Lower lobe of right lung (tissue), 2 donors: ENCODE measurements at regions of chr1 and their contacts with region 1.

Region 1: DNA sequence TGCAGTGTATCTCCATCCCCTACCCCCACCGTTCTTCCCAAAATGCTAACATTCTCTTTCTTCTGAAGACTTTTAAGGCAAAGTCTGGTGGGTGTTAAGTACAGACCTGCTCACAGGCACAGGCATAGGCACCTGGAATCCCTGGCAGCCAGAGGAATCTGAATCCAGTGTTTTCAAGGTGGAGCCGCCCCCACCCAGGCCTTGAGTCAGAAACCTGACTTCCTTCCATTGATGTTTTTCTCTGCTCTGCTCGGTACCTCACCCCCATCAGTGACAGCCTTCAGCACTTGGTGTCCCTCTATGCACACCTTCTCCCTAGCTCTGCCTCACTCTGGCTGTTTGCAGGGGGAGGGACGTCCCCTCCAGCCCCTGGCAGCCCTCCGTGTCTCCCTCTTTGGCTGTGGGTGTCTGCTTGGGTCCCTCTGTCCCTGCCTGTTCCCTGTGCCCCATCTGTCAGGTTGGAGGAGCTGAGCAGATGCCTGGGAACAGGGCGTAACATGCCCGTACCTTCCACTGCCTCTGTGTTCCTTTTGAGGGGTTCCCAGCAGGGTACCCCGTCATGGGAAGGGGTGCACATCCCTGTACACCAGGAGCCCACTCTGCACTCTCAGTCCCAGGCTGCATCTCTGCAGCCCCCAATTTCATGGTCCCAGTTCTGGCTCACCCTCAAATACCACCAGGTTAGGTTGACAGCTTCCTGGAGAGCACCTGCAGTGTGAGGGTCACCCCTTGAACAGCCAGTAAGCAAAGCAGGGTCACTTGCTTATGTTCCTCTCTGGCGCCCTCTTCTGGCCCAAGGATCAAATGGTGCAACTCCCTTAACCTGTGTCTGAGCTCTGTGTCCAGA is 6.7 kb downstream of the NCDN start:
- DNase-seq: peak; percentile 78
- ATAC-seq: peak; percentile 73 to 75
- H3K4me3 ChIP-seq: no peak overlapping the region
- H3K27ac ChIP-seq: no peak overlapping the region
- H3K4me1 ChIP-seq: peaks cover 1% of the 10 kb centered on the region
- H3K27me3 ChIP-seq: no peaks in the 10 kb centered on the region
- CTCF ChIP-seq: peak; percentile 78

Region 2: DNA sequence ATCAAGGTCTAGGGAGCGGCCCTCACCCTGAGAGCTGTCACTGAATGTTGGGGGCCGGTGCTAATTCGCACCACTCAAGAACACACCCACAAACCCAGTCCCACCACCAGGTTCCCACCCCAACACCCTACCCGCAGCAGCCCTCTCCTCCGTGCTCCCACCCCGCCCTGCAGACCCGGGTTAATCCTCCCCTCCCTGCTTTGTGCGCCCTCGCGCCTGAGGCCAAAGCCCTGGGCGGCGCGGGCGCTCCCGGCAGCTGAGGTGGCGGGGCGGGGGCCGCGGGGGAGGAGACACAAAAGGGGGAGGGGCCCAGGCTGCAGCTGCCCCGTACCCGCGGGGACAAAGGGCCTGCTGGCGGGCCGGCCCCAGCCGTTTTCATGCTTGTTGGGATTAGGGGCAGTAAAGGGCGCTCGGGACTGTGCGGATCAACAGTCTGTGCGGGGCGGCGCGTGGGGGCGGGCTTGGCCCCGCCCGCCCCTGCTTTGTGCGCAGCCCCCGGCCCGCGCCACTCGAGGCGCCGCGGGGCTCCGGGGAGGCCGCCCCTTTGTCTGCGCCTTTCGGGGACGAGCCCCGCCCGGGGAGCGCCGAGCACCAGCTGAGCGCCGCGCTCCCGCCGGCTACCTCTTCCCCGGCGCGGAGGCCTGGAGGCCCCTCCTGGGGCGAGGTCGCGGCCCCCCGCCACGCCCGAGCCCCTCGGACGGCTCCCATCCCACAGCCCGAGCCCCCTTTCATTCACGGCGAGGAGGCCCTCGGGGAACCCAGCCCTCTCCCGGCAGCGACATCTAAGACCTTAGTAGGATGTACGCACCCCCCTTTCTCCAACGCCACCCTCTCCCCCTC is 143.6 kb after region 1 on chr1:
- intact Hi-C with region 1: no loop called
- DNase-seq: no peak
- ATAC-seq: peak; percentile 66 to 67
- H3K4me3 ChIP-seq: peak overlapping the region; percentile 50
- H3K27ac ChIP-seq: no peak overlapping the region
- H3K4me1 ChIP-seq: no peaks in the 10 kb centered on the region
- H3K27me3 ChIP-seq: peaks cover 38% of the 10 kb centered on the region
- CTCF ChIP-seq: no peak

Region 3: GRCh38 chr1:35726450-35727433 is 162.5 kb after region 1 on chr1:
- intact Hi-C with region 1: loop called (anchors 10 kb)
- DNase-seq: peak; percentile 55
- ATAC-seq: peak; percentile 85 to 91
- H3K4me3 ChIP-seq: no peak overlapping the region
- H3K27ac ChIP-seq: no peak overlapping the region
- H3K4me1 ChIP-seq: peaks cover 6% of the 10 kb centered on the region
- H3K27me3 ChIP-seq: no peaks in the 10 kb centered on the region
- CTCF ChIP-seq: peak; percentile 87